ENCODE measurements at regions of chr9 and their contacts with region 1.

Region 1: DNA sequence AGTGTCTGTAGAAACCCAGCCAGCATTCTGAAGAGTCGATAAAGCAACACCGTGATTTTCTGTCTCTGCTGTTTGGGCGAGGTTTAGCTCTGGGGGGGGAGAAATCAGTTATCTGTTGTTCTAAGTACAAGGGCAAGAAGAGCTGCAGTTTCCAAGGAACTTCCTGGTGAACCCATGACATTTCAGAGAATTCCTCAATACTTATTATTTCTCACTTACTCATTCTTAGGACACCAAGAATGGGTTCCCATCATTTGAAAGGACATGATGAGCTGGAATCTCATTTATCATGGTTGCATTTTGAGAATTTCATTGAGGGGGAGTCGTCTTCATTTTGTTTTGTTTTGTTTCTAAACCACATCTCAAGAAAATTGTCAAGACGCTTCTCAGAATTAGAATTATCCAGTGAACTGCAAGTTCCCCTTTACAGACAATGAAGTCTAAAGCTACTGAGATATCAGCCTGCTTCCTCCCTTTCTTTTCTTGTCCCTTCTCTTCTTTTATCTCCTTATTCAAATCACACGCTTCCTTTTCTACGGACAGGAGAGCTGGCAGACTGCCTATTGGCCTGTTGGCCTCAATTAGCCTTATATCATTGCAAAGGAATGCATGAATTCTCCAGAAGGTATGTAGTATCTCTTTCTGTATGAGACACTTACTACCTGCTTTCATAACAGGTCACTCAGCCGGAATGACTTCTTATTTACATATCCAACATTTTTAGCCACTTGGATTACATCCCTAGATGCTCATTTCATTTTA is 53.7 kb downstream of the ZNF462 start:
- DNase-seq: peak; percentile 73
- H3K4me3 ChIP-seq: no peak overlapping the region
- H3K27ac ChIP-seq: peak overlapping the region; percentile 37 to 62 (median 48)
- H3K4me1 ChIP-seq: peaks cover 17 to 51% (median 25%) of the 10 kb centered on the region in 4 donors
- H3K27me3 ChIP-seq: no peaks in the 10 kb centered on the region
- CTCF ChIP-seq: no peak
- EP300 ChIP-seq: no peak
- POLR2A ChIP-seq: no peak

Region 2: DNA sequence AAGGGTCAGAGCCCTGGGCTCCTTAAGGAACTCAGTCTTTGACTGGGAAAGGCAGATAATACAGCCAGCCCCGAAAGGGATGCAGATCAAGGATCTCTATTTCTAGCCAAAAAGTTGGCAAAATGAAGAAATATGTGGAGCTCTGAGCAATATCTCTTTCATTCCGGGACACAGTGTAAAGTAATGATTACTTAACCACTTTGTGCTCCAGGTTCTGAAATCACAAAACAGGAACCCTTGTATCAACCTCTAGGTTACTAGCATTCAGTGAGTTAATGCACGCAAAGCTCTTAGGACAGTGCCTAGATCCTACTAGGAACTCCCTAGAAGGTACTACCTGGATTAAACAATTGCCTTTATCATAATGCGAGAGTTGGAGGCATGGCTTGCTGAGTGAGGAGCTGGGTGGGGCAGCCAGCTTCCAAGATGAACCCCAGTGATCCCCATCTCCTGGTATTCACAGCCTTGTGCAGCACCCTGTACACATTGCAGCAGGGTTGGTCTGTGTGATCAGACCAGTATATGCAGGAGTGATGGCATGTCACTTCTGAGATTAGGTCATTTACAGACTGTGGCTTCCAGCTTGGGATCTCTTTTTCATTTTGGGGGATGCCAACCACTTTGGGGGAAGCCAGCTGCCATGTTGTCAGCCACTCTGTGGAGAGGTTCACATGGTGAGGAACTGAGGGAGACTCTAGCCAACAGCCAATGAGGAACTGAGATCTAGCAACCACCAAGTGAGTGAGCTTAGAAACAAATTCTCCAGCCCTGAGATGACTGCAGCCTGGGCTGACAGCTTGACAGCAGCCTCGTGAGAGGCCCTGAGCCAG is 1775.3 kb before region 1 on chr9:
- in situ Hi-C with region 1: no loop called
- intact Hi-C with region 1: loop called (anchors 5 kb)
- DNase-seq: no peak
- H3K4me3 ChIP-seq: no peak overlapping the region
- H3K27ac ChIP-seq: peak overlapping the region in 1 of 4 donors; percentile 30
- H3K4me1 ChIP-seq: peaks cover 0 to 18% (median 14%) of the 10 kb centered on the region in 4 donors
- H3K27me3 ChIP-seq: no peaks in the 10 kb centered on the region
- CTCF ChIP-seq: no peak
- EP300 ChIP-seq: no peak
- POLR2A ChIP-seq: no peak